HEK293 (cell line): ENCODE measurements at regions of chr10 and their contacts with region 1.

Region 1: DNA sequence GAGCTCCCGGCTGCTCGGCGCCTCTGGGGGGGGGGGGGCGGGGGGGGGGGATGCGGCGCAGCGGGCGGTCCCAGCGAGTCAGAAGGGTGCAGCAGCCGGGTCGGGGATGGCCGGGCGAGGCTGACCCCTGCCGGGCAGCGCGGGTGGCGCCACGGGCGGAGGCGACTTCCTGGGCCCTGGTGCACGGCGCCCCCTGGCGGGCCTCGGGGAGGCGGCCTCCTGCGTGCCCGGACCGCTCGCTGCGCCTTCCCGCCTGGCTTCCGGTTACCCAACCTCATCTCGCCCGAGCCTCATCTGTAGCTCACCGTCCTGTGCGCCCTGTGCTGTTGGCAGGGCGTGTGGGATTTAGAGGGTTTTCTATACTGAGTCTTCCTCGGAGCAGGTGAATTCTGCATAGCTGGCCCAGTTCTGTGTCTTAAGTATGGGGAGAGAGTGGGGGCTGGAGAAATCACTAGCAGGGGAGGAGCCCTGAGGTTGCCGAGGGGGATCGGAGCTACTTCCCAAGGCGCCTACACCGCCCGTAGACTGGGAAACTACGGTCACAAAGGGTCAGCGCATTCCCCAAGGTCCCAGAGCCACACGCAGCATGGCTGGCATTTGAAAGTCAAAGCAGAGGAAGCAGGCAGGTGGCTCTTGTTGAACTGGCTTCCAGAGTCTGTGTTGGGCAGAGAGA is 28.3 kb upstream of the WDFY4 start:
- H3K4me3 ChIP-seq: peak overlapping the region; percentile 50
- H3K27ac ChIP-seq: no peak overlapping the region; the same call in 1 of the 2 replicates
- H3K4me1 ChIP-seq: no peaks in the 10 kb centered on the region
- CTCF ChIP-seq: peak; percentile 68

Region 2: GRCh38 chr10:48444266-48444665 is 212.1 kb before region 1 on chr10:
- CTCF ChIA-PET with region 1: interaction called, 21 read pairs
- POLR2A ChIA-PET with region 1: no interaction called
- H3K4me3 ChIP-seq: no peak overlapping the region
- H3K27ac ChIP-seq: no peak overlapping the region
- H3K4me1 ChIP-seq: no peaks in the 10 kb centered on the region
- CTCF ChIP-seq: no peak; the same call in 1 of the 2 replicates

Region 3: DNA sequence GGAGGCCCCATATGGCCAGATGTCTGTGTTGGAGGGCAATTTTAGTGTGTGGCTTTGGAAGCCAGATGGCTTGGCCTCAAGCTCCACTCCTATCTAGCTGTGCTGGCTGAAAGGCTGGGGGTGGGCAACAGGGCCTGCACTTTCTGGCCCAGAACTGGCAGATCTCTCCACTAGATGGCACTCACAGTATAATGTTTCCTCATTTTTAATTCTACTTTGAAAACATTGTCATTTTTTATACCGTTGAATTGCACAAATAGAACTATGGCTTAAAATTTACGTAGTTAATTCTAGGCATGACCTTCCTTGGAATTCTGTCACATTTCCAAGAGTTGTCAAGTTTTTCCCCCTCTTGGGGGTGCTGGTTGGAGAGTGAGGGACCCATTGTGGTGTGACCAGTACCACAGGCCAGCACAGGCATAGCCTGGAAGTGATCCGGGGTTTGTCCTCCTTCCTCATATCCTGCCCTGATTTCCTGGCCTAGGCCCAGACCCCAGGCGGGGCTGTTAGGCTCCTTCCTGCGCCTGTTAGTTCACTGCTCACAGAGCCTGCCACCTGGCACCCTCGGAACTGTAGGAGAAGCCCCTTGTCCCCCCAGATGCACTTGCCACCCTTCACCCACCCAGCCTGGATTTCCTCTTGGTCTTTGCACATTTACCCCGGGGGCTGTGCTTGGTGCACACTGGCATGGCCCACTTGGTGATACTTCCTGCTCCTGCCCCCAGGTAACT is 104.4 kb before region 1 on chr10:
- CTCF ChIA-PET with region 1: interaction called, 139 read pairs
- POLR2A ChIA-PET with region 1: no interaction called
- H3K4me3 ChIP-seq: no peak overlapping the region
- H3K27ac ChIP-seq: no peak overlapping the region
- H3K4me1 ChIP-seq: no peaks in the 10 kb centered on the region
- CTCF ChIP-seq: no peak

Region 4: DNA sequence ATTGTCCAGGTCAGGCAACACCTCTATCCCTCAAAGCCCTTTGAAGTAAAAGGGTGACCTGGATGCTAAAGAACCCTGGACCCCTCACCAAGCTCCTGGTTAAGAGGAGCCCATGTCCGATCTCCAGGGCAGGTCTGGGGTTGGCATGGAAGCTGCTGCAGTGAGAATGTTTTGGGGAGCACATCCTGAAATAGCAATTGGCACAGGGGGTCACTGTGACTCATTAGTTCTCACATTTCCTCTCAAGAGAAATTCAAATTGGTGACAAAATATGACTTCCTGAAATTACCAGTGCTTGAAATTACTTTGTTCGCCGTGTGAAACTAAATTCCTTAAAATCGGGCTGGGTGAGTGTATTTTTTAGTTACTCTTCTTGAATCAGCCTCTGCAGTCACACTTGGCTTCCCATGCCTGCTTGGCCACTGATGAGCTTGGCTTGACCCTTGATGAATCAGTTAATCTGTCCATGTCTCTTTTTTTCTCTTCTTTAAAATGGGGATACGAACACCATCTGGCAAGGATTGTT is 32.7 kb before region 1 on chr10:
- CTCF ChIA-PET with region 1: interaction called, 18 read pairs
- POLR2A ChIA-PET with region 1: no interaction called
- H3K4me3 ChIP-seq: no peak overlapping the region
- H3K27ac ChIP-seq: no peak overlapping the region
- H3K4me1 ChIP-seq: no peaks in the 10 kb centered on the region
- CTCF ChIP-seq: no peak

Region 5: DNA sequence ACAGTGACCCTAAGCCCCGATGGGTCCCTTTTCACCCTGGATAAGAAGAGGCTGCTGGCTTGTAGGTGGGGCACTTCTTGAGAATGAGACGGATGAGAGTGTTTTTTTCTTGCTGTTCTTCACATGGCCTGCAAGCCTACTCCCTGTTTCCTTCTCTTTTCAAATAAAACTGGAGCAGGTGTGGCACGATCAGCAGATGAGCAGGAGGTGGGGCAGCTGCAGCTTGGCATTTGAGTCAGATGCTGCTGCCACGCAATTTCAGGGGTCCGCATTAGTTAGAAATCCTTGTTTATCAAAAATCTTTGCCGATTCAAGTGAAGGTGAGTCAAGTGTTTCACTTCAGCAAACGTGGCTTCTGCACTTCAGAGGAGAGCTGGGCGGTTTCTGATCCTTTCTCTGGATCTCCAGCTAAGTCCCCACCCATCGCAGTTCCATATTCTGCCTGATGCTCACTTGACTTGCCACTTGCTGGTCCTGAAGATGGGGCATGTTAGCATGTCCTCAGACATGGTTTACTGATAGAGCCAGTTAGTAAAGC is 49.1 kb after region 1 on chr10:
- CTCF ChIA-PET with region 1: no interaction called
- POLR2A ChIA-PET with region 1: no interaction called
- H3K4me3 ChIP-seq: no peak overlapping the region
- H3K27ac ChIP-seq: no peak overlapping the region
- H3K4me1 ChIP-seq: no peaks in the 10 kb centered on the region
- CTCF ChIP-seq: no peak

Region 6: DNA sequence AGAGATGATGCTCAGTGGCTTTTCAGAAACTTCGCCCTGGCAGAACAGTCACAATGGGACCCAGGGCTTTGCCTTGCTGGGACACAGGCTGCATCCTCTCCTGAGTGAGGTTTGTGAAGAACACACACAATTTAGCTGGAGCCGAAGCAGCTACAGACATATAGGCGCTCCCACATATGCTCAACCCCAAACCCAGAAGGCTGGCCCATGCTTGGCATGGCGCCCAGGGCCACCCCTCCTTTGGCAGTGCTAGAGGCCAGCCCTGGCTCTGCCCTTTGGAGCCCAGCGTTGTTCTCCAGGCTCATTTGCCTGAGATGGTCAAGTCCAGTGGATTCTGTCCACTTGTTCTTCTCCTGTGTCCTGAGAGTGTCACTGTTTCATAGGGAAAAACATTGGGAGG is 122.7 kb after region 1 on chr10:
- CTCF ChIA-PET with region 1: no interaction called
- POLR2A ChIA-PET with region 1: no interaction called
- H3K4me3 ChIP-seq: no peak overlapping the region
- H3K27ac ChIP-seq: no peak overlapping the region
- H3K4me1 ChIP-seq: no peaks in the 10 kb centered on the region
- CTCF ChIP-seq: no peak

Region 7: GRCh38 chr10:49161411-49161997 is 505.1 kb after region 1 on chr10:
- CTCF ChIA-PET with region 1: interaction called, 13 read pairs
- POLR2A ChIA-PET with region 1: no interaction called
- H3K4me3 ChIP-seq: no peak overlapping the region
- H3K27ac ChIP-seq: no peak overlapping the region
- H3K4me1 ChIP-seq: no peaks in the 10 kb centered on the region
- CTCF ChIP-seq: peak; percentile 42; the same call in 1 of the 2 replicates